CD4-positive, alpha-beta T cell (primary cell): ENCODE measurements at regions of chr9 and their contacts with region 1.

Region 1: GRCh38 chr9:136118320-136119060 is at the start of gene TMEM250:
- DNase-seq: peak; percentile 93 to 99 (median 96)
- ATAC-seq: peak; percentile 93
- H3K4me3 ChIP-seq: peak within 1 kb of the TSS; percentile 54
- H3K4me3 Mint-ChIP-seq: peak within 1 kb of the TSS; percentile 89
- H3K27ac ChIP-seq: peak within 1 kb of the TSS; percentile 76 to 79
- H3K27ac Mint-ChIP-seq: peak within 1 kb of the TSS; percentile 79
- H3K4me1 ChIP-seq: peaks cover 62% of the 10 kb centered on the region
- H3K4me1 Mint-ChIP-seq: peaks cover 22% of the 10 kb centered on the region
- H3K27me3 ChIP-seq: no peaks in the 10 kb centered on the region
- H3K27me3 Mint-ChIP-seq: no peaks in the 10 kb centered on the region
- CTCF ChIP-seq: no peak
- total RNA-seq, gene TMEM250: 6.5 to 7.9 TPM

Region 2: DNA sequence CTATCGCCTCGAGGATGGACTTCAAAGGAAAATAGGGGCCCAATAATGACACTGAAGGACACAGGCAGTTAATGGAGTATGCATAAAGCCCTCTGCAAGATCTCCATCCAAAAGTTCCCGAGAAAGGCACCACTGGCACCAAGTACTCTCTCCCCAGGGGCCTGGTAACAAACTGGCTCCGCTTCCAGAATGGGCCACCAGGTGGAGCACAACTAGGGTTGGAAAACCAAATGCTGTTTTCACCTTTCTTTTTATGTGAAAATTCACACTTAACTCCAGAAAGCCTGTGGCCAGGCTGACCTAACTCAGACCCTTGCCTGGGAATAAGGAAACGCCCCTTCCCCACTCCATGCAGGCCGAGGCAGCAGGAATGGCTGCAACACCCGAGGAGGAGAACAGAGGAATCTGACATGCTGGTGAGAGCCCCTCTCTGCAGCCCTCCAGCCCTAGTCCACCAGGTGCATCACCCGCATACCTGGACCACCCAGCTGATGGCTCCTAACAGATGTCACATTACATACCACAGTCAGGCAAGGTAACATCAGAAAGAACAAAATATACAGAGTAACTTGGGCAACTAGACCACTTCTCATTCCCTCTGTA is 253.9 kb before region 1 on chr9:
- CTCF ChIA-PET with region 1: no interaction called
- POLR2A ChIA-PET with region 1: no interaction called
- intact Hi-C with region 1: loop called in 1 of 2 experiments (anchors 1 kb)
- DNase-seq: peak; percentile 59 to 82 (median 70)
- ATAC-seq: peak; percentile 74
- H3K4me3 ChIP-seq: no peak overlapping the region
- H3K4me3 Mint-ChIP-seq: no peak overlapping the region
- H3K27ac ChIP-seq: no peak overlapping the region
- H3K27ac Mint-ChIP-seq: no peak overlapping the region
- H3K4me1 ChIP-seq: peaks cover 7% of the 10 kb centered on the region
- H3K4me1 Mint-ChIP-seq: peaks cover 13% of the 10 kb centered on the region
- H3K27me3 ChIP-seq: no peaks in the 10 kb centered on the region
- H3K27me3 Mint-ChIP-seq: no peaks in the 10 kb centered on the region
- CTCF ChIP-seq: peak; percentile 83

Region 3: GRCh38 chr9:135961277-135961705 is 157.2 kb before region 1 on chr9 and contains the start of gene UBAC1:
- CTCF ChIA-PET with region 1: interaction called, 3 read pairs
- POLR2A ChIA-PET with region 1: interaction called, 4 read pairs
- intact Hi-C with region 1: loop called in 1 of 2 experiments (anchors 1 kb)
- DNase-seq: peak; percentile 89 to 98 (median 94)
- ATAC-seq: peak; percentile 91
- H3K4me3 ChIP-seq: peak within 1 kb of the TSS; percentile 84
- H3K4me3 Mint-ChIP-seq: peak within 1 kb of the TSS; percentile 92
- H3K27ac ChIP-seq: peak within 1 kb of the TSS in 1 of 2 donors; percentile 35
- H3K27ac Mint-ChIP-seq: peak within 1 kb of the TSS; percentile 86
- H3K4me1 ChIP-seq: peaks cover 30% of the 10 kb centered on the region
- H3K4me1 Mint-ChIP-seq: peaks cover 27% of the 10 kb centered on the region
- H3K27me3 ChIP-seq: peaks cover 0 to 2% of the 10 kb centered on the region in 2 experiments
- H3K27me3 Mint-ChIP-seq: no peaks in the 10 kb centered on the region
- CTCF ChIP-seq: peak; percentile 20
- total RNA-seq, gene UBAC1: 16.4 to 19.6 TPM

Region 4: DNA sequence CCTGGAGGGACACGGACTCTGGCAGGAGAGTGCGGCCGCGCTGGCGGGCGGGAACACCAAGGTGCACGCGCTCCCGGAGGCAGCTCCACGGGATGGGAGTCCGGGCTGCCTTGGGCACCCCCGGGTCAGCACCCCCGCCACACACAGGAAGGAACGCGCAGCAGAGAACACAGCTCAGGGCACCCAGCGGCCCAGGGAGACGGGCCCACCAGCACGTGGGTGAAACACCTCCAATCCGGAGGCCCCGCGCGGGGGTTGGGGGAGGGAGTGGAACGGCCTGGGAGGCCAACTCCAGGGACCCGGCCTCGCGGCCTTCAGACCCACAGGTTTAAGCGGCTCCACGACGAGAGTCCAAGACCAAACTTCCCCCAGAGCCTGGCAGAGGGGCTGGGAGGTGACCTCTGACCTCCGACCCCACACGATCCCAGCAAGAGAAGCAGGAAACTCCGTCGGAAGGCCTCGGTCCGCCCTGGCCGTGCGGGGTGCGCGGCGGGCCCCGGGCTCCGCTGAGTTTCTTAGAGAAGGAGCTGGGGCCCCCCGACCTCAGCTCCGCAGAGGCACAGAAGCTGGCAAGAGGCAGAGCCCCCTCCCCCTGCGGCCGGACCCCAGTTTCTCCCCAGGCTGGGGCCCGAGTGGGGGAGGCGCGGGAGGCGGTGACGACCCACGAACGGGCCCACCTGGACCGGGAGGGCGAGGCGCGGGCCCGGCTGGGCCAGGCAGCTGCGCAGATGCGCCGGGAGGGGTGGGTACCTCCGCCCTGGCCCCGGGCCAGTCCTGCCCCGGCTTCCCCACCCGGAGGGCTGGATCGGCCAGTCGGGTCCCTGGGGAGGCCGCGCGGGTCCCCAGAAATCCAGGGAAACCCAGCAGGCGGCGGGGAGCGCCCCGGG is 24.3 kb before region 1 on chr9:
- CTCF ChIA-PET with region 1: interaction called, 8 read pairs
- POLR2A ChIA-PET with region 1: interaction called, 5 read pairs
- intact Hi-C with region 1: loop called (anchors 1 kb)
- DNase-seq: peak in 12 of 14 experiments; percentile 38 to 72 (median 52)
- ATAC-seq: peak; percentile 76
- H3K4me3 ChIP-seq: peak overlapping the region; percentile 57
- H3K4me3 Mint-ChIP-seq: peak overlapping the region; percentile 86
- H3K27ac ChIP-seq: peak overlapping the region; percentile 16 to 22
- H3K27ac Mint-ChIP-seq: peak overlapping the region; percentile 36
- H3K4me1 ChIP-seq: peaks cover 64% of the 10 kb centered on the region
- H3K4me1 Mint-ChIP-seq: peaks cover 19% of the 10 kb centered on the region
- H3K27me3 ChIP-seq: peaks cover 0 to 2% of the 10 kb centered on the region in 2 experiments
- H3K27me3 Mint-ChIP-seq: no peaks in the 10 kb centered on the region
- CTCF ChIP-seq: no peak

Region 5: DNA sequence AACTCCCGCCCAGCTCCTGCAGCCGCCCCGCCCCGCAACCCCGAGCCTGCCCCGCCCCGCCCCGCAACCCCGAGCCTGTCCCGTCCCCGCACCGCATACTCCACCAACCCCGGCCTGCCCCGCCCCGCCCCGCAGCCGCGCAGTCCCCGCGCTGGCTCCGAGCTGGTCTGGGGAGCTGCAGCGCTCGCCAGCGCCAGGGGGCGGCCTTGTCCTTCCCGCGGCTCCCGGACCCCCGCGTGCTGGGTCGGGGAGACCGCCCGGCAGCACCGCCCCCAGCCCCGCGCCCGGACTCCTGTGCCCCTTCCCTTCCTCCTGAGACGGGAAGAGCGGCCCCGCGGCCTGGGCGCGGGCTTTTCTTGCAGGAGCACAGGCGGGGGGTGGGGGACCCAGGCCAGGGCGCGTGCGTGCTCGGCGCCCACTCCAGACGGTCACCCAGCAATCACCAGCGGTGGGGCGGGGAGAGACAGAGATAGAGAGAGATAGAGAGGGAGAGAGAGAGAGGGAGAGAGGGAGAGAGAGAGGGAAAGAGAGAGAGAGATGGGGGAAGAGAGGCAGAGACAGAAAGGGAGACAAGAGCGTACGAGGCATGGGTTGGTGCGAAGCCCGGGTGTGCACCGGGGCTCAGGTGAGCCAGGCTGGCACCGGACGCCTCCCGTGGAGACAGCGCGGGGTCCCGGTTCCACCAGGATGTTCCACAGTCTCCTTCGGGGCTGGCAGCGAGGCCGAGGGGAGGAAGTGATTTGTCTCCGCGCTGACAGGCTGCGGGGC is 14.9 kb after region 1 on chr9:
- CTCF ChIA-PET with region 1: no interaction called
- POLR2A ChIA-PET with region 1: no interaction called
- intact Hi-C with region 1: no loop called
- DNase-seq: peak in 4 of 14 experiments; percentile 20 to 60 (median 42)
- ATAC-seq: peak; percentile 74
- H3K4me3 ChIP-seq: peak overlapping the region; percentile 22
- H3K4me3 Mint-ChIP-seq: peak overlapping the region; percentile 58
- H3K27ac ChIP-seq: no peak overlapping the region
- H3K27ac Mint-ChIP-seq: no peak overlapping the region
- H3K4me1 ChIP-seq: peaks cover 8% of the 10 kb centered on the region
- H3K4me1 Mint-ChIP-seq: peaks cover 6% of the 10 kb centered on the region
- H3K27me3 ChIP-seq: peaks cover 35 to 42% of the 10 kb centered on the region in 2 experiments
- H3K27me3 Mint-ChIP-seq: peaks cover 50% of the 10 kb centered on the region
- CTCF ChIP-seq: no peak